Esophagus muscularis mucosa (tissue), 4 donors: ENCODE measurements at regions of chr10 and their contacts with region 1.

Region 1: DNA sequence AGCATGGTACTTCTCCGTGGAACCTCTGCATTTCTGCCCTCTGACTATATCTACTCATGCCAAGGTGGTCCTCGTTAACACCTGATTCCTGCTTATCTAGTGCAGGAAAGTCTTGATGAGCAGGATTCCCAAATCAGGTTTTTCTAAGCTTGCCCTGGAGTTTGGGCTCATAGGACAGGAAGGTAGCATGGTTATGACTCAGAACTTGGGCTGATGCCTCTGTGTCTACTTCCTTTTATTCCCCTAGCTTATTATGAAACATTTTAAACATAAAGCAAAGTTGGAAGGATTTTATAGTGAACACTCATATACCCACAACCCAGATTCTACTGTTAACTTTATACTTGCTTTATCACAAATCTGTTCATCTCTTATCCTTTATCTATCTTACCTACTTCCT is 5.6 kb downstream of the SUFU start:
- DNase-seq: no peak
- H3K4me3 ChIP-seq: no peak overlapping the region
- H3K27ac ChIP-seq: no peak overlapping the region
- H3K4me1 ChIP-seq: peaks cover 22 to 45% (median 30%) of the 10 kb centered on the region in 4 donors
- H3K27me3 ChIP-seq: no peaks in the 10 kb centered on the region
- CTCF ChIP-seq: no peak
- EP300 ChIP-seq: no peak
- POLR2A ChIP-seq: no peak

Region 2: DNA sequence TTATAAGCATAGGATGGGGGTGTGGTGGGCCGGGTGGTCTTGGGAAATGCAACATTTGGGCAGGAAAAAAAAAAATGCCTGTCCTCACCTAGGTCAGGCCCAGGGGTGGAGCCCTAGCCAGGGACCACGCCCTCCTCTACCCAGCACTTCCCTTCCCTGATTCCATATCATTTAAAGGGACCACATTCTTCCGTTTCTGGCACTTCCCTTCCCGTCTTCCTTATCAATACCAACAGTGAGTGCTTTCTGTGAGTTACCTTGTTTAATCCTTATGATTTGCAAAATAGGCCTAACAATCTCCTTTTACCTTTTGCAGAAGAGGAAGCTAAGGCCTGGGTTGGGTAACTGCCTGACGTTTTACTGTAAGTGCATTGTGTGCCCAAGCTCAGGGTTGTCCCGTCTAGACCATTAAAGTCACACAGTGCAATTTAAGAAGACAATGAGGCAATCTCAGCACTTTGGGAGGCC is 41.4 kb before region 1 on chr10:
- intact Hi-C with region 1: no loop called
- DNase-seq: no peak
- H3K4me3 ChIP-seq: no peak overlapping the region
- H3K27ac ChIP-seq: no peak overlapping the region
- H3K4me1 ChIP-seq: peaks cover 0 to 8% (median under 1%) of the 10 kb centered on the region in 4 donors
- H3K27me3 ChIP-seq: no peaks in the 10 kb centered on the region
- CTCF ChIP-seq: no peak
- EP300 ChIP-seq: no peak
- POLR2A ChIP-seq: no peak

Region 3: DNA sequence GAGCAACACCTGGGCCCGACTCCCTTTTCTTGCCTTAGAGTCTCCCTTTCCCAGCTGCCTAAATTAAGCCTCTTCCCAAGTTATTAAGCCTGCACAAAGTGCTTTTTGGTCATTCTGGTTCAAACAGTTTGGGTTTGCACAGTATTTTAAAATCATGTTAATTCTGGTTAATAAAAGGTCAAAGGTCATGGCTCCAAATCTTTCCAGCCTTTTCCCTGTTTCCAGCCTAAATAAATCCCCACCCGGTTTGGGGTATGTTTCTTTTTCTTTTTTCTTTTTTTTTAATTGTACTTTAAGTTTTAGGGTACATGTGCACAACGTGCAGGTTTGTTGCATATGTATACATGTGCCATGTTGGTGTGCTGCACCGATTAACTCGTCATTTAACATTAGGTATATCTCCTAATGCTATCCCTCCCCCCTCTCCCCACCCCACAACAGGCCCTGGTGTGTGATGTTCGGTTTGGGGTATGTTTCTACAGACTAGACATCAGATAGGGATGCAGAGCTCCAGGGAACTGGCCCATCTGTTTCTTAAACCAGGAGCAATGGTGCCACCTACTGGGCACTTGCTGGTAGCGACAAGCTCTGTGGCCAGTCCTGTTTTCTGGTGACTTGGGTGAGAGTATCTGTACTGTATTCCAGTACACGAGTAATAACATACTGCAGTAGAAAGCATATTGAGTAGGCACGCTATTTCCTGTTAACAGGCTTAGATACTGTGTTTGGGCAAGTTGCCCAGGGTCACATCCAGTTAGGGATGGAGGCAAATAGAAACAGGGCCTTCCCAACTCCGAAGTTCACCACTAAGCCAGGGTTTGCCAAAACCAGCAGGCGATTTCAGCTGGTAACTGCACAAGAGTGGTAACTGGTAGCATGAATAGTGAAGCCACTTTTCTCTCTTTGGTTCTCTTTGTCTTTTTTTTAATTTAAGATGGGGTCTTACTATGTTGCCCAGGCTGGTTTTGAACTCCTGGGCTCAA is 74.3 kb after region 1 on chr10:
- intact Hi-C with region 1: loop called (anchors 2 kb)
- DNase-seq: peak; percentile 96
- H3K4me3 ChIP-seq: no peak overlapping the region
- H3K27ac ChIP-seq: no peak overlapping the region
- H3K4me1 ChIP-seq: peaks cover 5 to 47% (median 36%) of the 10 kb centered on the region in 4 donors
- H3K27me3 ChIP-seq: no peaks in the 10 kb centered on the region
- CTCF ChIP-seq: peak; percentile 84 to 89 (median 87)
- EP300 ChIP-seq: no peak
- POLR2A ChIP-seq: no peak